Caco-2 (cell line): ENCODE measurements at regions of chr7 and their contacts with region 1.

Region 1: DNA sequence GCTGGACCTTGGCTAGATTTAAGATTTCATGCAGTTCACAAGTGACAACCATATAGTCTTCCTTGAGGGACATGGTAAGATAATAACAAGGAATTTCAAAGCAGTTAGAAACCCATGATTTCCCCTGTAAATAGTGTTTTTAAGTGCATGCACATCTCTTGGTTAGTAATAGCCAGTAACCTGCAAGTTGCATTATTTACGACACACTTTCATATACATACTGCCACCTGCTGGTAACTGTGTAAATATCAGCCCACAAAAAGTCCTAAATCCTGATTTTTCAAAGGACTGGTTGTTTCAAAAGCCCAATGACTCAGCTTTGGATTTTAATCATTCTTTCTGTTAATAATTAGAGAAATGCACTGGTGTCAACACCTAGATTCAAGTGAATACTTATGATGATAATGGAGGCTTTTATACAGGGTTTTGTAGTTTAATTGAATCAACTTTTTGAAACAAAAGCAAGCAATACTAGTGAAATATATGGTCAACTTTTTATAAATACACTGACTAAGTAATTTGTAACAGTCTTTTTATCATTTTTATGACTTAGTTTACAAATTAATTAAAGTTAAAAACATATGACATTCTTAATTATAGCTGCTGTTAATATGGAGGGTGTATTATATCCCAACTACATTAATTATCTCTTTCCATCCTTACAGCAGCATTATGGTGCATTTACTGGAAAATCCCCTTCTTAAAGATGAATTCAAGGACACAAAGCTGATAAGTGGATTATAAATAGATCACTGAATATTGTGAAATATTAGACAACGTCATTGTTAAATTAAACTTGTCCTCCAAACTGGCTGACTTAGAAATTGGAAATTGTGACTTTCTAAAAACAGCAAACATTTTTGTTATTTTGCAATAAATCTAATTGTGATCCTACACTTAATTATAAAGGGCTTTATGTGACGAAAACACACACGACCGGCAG is 367.7 kb upstream of the SEMA3D start:
- DNase-seq: peak; percentile 30 to 56
- H3K4me3 ChIP-seq: no peak overlapping the region
- H3K4me3 Mint-ChIP-seq: no peak overlapping the region
- H3K27ac Mint-ChIP-seq: no peak overlapping the region
- H3K4me1 ChIP-seq: no peaks in the 10 kb centered on the region
- H3K4me1 Mint-ChIP-seq: no peaks in the 10 kb centered on the region
- H3K27me3 ChIP-seq: no peaks in the 10 kb centered on the region
- H3K27me3 Mint-ChIP-seq: no peaks in the 10 kb centered on the region
- CTCF ChIP-seq: peak; percentile 63 to 73

Region 2: DNA sequence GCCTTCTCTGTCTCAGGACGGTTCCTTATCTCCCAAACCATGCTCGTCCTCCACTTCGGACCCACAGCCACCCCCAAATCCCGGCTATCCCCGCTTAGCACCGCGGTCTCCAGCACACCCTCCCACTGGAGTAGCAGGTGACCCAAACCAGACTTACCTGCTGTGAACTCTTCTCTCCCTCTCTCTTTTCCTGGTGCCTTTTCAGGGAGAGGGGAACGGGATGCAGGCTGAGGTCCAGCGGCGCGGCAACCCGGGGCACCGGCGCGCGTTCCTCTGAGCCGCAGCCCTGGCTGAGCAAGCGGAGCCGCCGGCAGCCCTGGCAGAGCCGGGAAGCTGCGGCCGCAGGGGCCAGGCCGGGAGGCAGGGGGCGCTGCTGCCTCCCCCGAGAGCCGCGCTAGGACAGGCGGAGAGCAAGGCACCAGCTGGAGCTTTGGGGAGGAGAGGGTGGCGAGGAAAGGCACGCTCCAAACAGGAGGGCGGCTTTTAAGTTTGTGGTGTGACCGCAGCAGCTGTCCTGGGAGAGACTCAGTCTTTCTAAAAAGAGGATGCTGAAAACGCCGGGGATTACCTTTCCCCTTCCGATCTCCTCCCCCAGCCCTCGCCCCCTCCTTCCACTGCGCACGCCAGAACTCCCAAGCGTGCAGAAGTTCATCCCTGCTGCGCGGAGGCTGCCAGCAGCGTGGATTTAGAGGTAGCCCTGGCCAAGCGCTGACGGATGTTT is 367.8 kb before region 1 on chr7 and contains the start of gene SEMA3D:
- CTCF ChIA-PET with region 1: no interaction called
- POLR2A ChIA-PET with region 1: no interaction called
- intact Hi-C with region 1: loop called (anchors 10 kb)
- DNase-seq: peak; percentile 33 to 56
- H3K4me3 ChIP-seq: peak within 1 kb of the TSS; percentile 21; the same call in 1 of the 2 replicates
- H3K4me3 Mint-ChIP-seq: peak within 1 kb of the TSS; percentile 64
- H3K27ac Mint-ChIP-seq: no peak within 1 kb of the TSS
- H3K4me1 ChIP-seq: no peaks in the 10 kb centered on the region
- H3K4me1 Mint-ChIP-seq: no peaks in the 10 kb centered on the region
- H3K27me3 ChIP-seq: no peaks in the 10 kb centered on the region
- H3K27me3 Mint-ChIP-seq: no peaks in the 10 kb centered on the region
- CTCF ChIP-seq: peak; percentile 26 to 35
- total RNA-seq, gene SEMA3D: 0.61 and 0.84 TPM in 2 replicates

Region 3: DNA sequence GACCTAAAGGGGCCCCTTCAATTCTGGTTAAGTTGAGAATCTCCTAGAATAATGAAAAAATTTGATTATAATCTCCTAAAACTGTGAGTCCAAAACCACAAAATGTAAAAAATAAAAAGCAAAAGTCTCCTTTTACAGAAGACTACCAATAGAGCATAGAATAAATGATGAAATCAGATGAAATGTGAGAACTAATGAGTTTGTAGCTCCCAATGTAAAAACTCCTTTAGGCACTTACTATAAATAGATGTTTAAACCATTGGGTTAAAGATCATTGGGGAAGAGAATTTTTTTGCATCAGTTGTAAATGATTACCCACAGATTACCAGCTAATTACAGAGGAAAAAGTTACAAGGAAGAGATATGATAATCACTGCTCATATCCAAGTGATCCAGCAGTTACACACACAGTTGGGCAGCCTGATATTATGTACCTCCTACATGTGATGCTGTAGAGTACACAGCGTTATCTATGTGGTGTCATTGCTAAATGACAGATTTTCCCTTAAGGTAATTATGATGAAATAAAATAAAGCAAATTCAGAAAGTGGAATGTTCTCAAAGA is 85.0 kb before region 1 on chr7:
- CTCF ChIA-PET with region 1: no interaction called
- POLR2A ChIA-PET with region 1: no interaction called
- intact Hi-C with region 1: loop called (anchors 5 kb)
- DNase-seq: no peak
- H3K4me3 ChIP-seq: no peak overlapping the region
- H3K4me3 Mint-ChIP-seq: no peak overlapping the region
- H3K27ac Mint-ChIP-seq: peak overlapping the region; percentile 37
- H3K4me1 ChIP-seq: no peaks in the 10 kb centered on the region; the same call in 1 of the 2 replicates
- H3K4me1 Mint-ChIP-seq: no peaks in the 10 kb centered on the region
- H3K27me3 ChIP-seq: no peaks in the 10 kb centered on the region
- H3K27me3 Mint-ChIP-seq: peaks cover 3% of the 10 kb centered on the region
- CTCF ChIP-seq: no peak

Region 4: DNA sequence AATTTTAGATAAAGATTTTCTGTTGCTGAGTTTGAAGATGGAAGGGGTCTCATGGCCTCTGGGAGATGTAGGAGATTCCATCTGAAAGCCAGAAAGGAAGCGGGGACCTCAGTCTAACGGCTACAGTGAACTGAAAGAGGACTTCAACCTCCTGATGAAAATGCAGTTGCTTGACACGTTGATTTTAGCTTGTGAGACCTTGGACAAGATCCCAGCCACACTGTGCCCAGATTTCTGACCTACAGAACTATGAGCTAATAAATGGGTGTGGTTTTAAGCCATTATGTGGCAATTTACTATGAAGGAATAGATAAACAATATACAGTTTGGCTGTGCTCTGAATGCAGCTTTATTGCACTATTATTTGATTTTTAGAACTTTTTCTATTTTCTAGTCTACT is 25.3 kb before region 1 on chr7:
- CTCF ChIA-PET with region 1: no interaction called
- POLR2A ChIA-PET with region 1: no interaction called
- intact Hi-C with region 1: no loop called
- DNase-seq: no peak
- H3K4me3 ChIP-seq: no peak overlapping the region
- H3K4me3 Mint-ChIP-seq: no peak overlapping the region
- H3K27ac Mint-ChIP-seq: no peak overlapping the region
- H3K4me1 ChIP-seq: no peaks in the 10 kb centered on the region
- H3K4me1 Mint-ChIP-seq: peaks cover 8% of the 10 kb centered on the region
- H3K27me3 ChIP-seq: no peaks in the 10 kb centered on the region
- H3K27me3 Mint-ChIP-seq: no peaks in the 10 kb centered on the region
- CTCF ChIP-seq: no peak

Region 5: GRCh38 chr7:85595639-85596268 is 41.2 kb after region 1 on chr7:
- CTCF ChIA-PET with region 1: interaction called, 10 read pairs
- POLR2A ChIA-PET with region 1: no interaction called
- intact Hi-C with region 1: no loop called
- DNase-seq: no peak
- H3K4me3 ChIP-seq: no peak overlapping the region
- H3K4me3 Mint-ChIP-seq: no peak overlapping the region
- H3K27ac Mint-ChIP-seq: no peak overlapping the region
- H3K4me1 ChIP-seq: peaks cover 36% of the 10 kb centered on the region
- H3K4me1 Mint-ChIP-seq: peaks cover 19% of the 10 kb centered on the region
- H3K27me3 ChIP-seq: no peaks in the 10 kb centered on the region
- H3K27me3 Mint-ChIP-seq: no peaks in the 10 kb centered on the region
- CTCF ChIP-seq: no peak

Region 6: GRCh38 chr7:85614684-85615083 is 60.2 kb after region 1 on chr7:
- CTCF ChIA-PET with region 1: no interaction called
- POLR2A ChIA-PET with region 1: no interaction called
- intact Hi-C with region 1: no loop called
- DNase-seq: no peak
- H3K4me3 ChIP-seq: no peak overlapping the region
- H3K4me3 Mint-ChIP-seq: no peak overlapping the region
- H3K27ac Mint-ChIP-seq: no peak overlapping the region
- H3K4me1 ChIP-seq: 0 out of 2 replicates have a peak, but pooled peaks cover 8% of the 10 kb centered on the region
- H3K4me1 Mint-ChIP-seq: peaks cover 18% of the 10 kb centered on the region
- H3K27me3 ChIP-seq: no peaks in the 10 kb centered on the region; the same call in 1 of the 2 replicates
- H3K27me3 Mint-ChIP-seq: peaks cover 2% of the 10 kb centered on the region
- CTCF ChIP-seq: no peak

Region 7: DNA sequence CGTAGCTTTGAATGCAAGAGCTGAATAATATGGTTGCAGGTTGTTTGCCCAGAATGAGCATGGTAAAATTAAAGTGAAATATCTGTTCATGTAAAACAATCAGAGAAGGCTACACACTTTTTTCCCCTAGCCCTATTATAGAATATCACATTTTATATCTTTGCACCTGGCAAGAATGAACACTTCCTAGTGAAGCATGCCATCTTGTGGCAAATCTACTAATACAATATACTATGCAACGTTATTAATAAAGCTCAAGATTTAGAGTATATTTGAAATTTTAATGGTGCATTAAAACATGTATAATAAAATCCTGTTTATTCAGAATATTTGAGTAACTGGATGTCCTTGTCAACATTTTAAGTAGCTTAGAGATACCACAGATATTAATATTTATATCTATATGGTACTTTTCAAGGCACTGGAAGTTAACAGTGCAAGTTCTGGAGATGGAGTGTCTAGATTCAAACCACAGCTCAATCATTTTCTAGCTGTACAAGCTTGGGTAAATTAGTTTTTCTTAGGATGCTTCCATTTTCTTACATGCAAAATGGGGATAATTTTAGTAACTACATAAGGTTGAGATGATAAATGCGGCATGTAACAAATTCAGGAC is 275.4 kb after region 1 on chr7:
- CTCF ChIA-PET with region 1: no interaction called
- POLR2A ChIA-PET with region 1: no interaction called
- intact Hi-C with region 1: loop called (anchors 2 kb)
- DNase-seq: peak in 1 of 2 experiments; percentile 25
- H3K4me3 ChIP-seq: no peak overlapping the region
- H3K4me3 Mint-ChIP-seq: no peak overlapping the region
- H3K27ac Mint-ChIP-seq: no peak overlapping the region
- H3K4me1 ChIP-seq: no peaks in the 10 kb centered on the region
- H3K4me1 Mint-ChIP-seq: peaks cover 7% of the 10 kb centered on the region
- H3K27me3 ChIP-seq: no peaks in the 10 kb centered on the region; the same call in 1 of the 2 replicates
- H3K27me3 Mint-ChIP-seq: no peaks in the 10 kb centered on the region
- CTCF ChIP-seq: peak; percentile 30 to 48

Region 8: DNA sequence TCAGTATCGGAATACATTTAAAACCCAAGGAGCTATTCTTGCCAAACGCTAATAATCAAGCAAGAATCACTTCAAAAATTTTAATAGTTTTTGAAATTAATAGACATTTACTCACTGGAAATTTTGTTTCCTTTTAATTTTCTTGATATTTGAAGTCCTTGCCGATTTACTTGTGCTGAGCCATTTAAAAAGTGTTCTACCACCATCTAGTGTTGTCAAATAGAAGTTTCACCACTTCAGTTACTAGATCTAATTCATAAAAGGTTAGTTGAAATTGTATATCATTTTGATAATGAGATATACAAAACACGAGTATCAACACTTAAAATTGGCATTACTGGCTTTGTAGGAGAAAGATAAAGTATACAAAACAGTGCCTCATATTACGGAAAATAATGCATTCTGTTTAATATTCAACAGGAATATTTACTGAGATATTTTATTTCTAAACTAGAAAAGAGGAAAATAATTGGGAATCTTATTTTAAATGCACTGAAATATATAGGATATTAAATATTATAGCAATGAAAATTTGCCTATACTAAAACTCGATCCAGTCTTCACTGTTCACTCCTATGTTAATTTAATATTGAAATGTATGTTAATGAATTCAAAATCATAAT is 297.2 kb after region 1 on chr7:
- CTCF ChIA-PET with region 1: no interaction called
- POLR2A ChIA-PET with region 1: no interaction called
- intact Hi-C with region 1: loop called (anchors 5 kb)
- DNase-seq: peak in 1 of 2 experiments; percentile 17
- H3K4me3 ChIP-seq: no peak overlapping the region
- H3K4me3 Mint-ChIP-seq: no peak overlapping the region
- H3K27ac Mint-ChIP-seq: no peak overlapping the region
- H3K4me1 ChIP-seq: no peaks in the 10 kb centered on the region
- H3K4me1 Mint-ChIP-seq: no peaks in the 10 kb centered on the region
- H3K27me3 ChIP-seq: no peaks in the 10 kb centered on the region
- H3K27me3 Mint-ChIP-seq: peaks cover 8% of the 10 kb centered on the region
- CTCF ChIP-seq: peak; percentile 32 to 36

Region 9: GRCh38 chr7:86469680-86470295 is 915.3 kb after region 1 on chr7:
- CTCF ChIA-PET with region 1: no interaction called
- POLR2A ChIA-PET with region 1: no interaction called
- intact Hi-C with region 1: loop called (anchors 10 kb)
- DNase-seq: peak; percentile 66 to 78
- H3K4me3 ChIP-seq: no peak overlapping the region
- H3K4me3 Mint-ChIP-seq: no peak overlapping the region
- H3K27ac Mint-ChIP-seq: no peak overlapping the region
- H3K4me1 ChIP-seq: no peaks in the 10 kb centered on the region
- H3K4me1 Mint-ChIP-seq: no peaks in the 10 kb centered on the region
- H3K27me3 ChIP-seq: no peaks in the 10 kb centered on the region
- H3K27me3 Mint-ChIP-seq: peaks cover 4% of the 10 kb centered on the region
- CTCF ChIP-seq: peak; percentile 76 to 79